Activated CD4-positive, alpha-beta memory T cell treated with anti-CD3 and anti-CD28 coated beads, Interleukin-2, amount 10 ng/mL, durations not matched to agents 7 days and 5 days (primary cell): ENCODE measurements at regions of chr14 and their contacts with region 1.

Region 1: GRCh38 chr14:77067632-77068514 is 30.2 kb upstream of the CIPC start:
- DNase-seq: peak; percentile 66
- H3K4me3 Mint-ChIP-seq: no peak overlapping the region
- H3K27ac Mint-ChIP-seq: no peak overlapping the region
- H3K4me1 Mint-ChIP-seq: peaks cover 2% of the 10 kb centered on the region
- H3K27me3 Mint-ChIP-seq: peaks cover 17% of the 10 kb centered on the region

Region 2: DNA sequence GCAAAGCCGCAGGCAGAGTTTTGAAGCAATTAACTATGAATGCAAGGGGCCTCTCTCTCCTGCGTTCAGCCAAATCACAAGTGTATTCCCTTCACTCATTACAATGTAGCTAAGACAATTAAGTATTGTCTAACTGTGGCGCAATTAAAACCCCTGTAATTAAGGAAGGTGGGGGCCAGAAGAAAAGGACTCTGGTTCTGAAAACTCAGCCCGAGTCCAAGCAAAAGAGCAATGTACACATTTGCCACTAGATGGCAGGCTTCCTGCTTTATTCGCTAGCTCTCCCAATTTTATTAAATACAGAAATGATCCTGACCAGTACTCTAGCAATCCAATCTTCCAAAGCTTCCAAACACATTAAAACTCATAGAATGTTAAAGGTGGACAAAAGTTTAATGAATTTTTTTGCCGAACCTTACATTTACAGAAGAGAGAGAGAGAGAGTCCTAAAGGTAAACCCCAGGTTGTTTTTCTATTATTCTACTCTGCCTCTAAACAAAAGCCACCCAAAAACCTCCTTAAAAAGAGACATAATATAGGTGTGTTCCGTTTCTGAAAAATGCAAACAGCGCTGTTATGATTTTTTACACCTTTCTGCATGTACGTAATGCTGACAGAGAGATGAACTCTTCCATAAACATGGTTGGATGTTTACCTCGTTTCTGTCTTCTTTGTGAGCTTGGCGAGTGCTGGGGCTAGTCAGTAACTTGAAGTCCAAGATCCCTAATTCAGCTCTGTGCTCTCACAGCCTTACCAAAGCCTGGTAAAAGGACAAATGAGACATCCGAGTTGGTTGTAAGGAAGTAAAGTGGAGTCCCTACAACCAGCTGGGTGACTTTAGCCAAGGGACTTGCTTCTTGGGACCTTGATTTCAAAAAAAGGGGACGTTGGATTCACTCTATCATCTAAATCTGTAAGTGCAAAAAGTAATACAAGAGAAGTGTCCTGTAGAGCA is 357.5 kb before region 1 on chr14:
- CTCF ChIA-PET with region 1: interaction called, 26 read pairs
- POLR2A ChIA-PET with region 1: no interaction called
- DNase-seq: no peak
- H3K4me3 Mint-ChIP-seq: no peak overlapping the region
- H3K27ac Mint-ChIP-seq: no peak overlapping the region
- H3K4me1 Mint-ChIP-seq: no peaks in the 10 kb centered on the region
- H3K27me3 Mint-ChIP-seq: peaks cover 6% of the 10 kb centered on the region

Region 3: GRCh38 chr14:76918751-76919543 is 148.9 kb before region 1 on chr14:
- CTCF ChIA-PET with region 1: interaction called, 200 read pairs
- POLR2A ChIA-PET with region 1: no interaction called
- DNase-seq: no peak
- H3K4me3 Mint-ChIP-seq: no peak overlapping the region
- H3K27ac Mint-ChIP-seq: no peak overlapping the region
- H3K4me1 Mint-ChIP-seq: peaks cover 53% of the 10 kb centered on the region
- H3K27me3 Mint-ChIP-seq: peaks cover 5% of the 10 kb centered on the region

Region 4: GRCh38 chr14:76962303-76962660 is 105.6 kb before region 1 on chr14:
- CTCF ChIA-PET with region 1: interaction called, 14 read pairs
- POLR2A ChIA-PET with region 1: no interaction called
- DNase-seq: no peak
- H3K4me3 Mint-ChIP-seq: peak overlapping the region; percentile 57
- H3K27ac Mint-ChIP-seq: peak overlapping the region; percentile 92
- H3K4me1 Mint-ChIP-seq: peaks cover 77% of the 10 kb centered on the region
- H3K27me3 Mint-ChIP-seq: peaks cover 47% of the 10 kb centered on the region

Region 5: DNA sequence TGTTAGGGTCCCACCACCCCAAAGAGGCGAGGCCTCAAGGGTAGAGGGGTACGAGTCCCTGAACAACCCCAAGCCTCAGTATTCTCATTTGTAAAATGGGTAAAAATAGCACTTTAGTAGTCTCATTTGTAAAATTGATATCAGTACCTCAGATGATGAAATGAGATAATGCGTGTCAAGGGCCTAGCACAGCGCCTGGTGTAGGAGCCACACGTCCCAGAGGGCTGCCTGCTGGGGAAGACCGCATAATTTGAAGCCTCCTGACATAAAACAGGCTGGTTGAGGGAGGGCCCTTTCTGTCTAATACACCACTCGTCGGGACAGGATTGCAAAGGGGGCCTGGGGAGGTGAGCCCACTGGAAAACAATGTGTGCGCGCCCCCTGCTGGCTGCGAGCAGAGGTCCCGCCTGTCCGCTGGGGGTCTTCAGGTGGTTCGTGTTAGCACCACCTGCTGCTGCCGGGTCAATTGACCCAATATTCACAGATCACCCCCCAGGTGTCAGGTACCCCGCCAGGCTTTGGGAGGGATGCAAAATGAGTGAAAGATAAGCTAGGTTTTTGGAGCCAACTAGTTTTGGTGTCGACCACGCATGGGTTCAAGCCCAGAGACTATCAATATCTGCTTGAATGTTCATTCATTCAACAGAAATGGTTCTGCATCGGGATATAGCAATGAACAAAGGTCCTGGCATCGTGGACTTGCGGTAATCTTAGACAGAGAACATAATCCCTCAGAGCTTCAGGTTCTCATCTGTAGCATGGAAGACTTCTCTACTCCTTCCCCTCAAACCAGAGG is 14.6 kb before region 1 on chr14:
- CTCF ChIA-PET with region 1: interaction called, 32 read pairs
- POLR2A ChIA-PET with region 1: no interaction called
- DNase-seq: peak; percentile 71
- H3K4me3 Mint-ChIP-seq: no peak overlapping the region
- H3K27ac Mint-ChIP-seq: no peak overlapping the region
- H3K4me1 Mint-ChIP-seq: peaks cover 24% of the 10 kb centered on the region
- H3K27me3 Mint-ChIP-seq: peaks cover 2% of the 10 kb centered on the region

Region 6: GRCh38 chr14:77124345-77125280 is 56.7 kb after region 1 on chr14:
- CTCF ChIA-PET with region 1: interaction called, 15 read pairs
- POLR2A ChIA-PET with region 1: interaction called, 5 read pairs
- DNase-seq: peak; percentile 76
- H3K4me3 Mint-ChIP-seq: peak overlapping the region; percentile 76
- H3K27ac Mint-ChIP-seq: no peak overlapping the region
- H3K4me1 Mint-ChIP-seq: peaks cover 43% of the 10 kb centered on the region
- H3K27me3 Mint-ChIP-seq: peaks cover 40% of the 10 kb centered on the region

Region 7: DNA sequence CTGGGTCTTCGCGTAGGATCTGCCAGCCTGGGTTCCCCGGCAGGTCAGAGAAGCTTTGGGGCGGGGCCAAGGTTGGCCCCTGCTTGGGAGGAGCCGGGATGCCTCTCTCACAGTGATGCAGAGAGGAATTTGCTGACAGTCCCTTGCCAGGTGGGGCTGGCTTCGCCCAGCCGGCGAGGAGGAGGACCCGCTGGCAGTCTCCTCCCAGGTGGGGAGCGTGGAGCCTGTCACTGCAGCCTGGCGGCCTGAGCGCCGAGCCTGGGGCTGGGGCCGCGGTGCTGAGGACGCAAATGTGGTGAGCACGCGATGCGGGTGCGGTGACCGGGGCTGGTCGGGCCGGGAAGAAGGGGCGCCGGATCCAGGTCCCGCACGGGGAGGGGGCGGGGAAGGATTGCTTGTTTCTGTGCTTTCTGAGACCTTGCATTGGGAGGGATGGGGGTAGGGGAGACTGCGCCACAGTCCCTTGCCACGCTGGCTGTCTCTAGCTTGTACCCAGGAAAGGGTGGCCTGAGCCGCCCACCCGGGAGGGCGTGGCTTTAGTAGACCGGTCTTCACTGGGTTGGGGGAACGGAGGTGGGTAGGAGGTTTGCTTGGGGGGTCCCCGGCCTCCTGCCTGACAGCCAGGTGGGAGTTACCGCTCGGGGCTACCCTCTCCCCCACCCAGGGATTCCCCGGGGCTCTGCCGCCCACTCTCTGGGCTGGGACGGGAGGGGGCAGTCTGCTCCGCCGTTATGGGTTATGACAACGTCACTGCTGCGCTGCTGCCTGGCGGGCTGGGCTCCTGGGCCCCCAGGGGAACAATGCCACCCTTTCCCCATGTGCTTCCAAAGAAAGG is 113.9 kb after region 1 on chr14 and contains the start of gene TMEM63C:
- CTCF ChIA-PET with region 1: no interaction called
- POLR2A ChIA-PET with region 1: no interaction called
- DNase-seq: peak; percentile 54
- H3K4me3 Mint-ChIP-seq: peak within 1 kb of the TSS; percentile 43
- H3K27ac Mint-ChIP-seq: no peak within 1 kb of the TSS
- H3K4me1 Mint-ChIP-seq: peaks cover 17% of the 10 kb centered on the region
- H3K27me3 Mint-ChIP-seq: peaks cover 16% of the 10 kb centered on the region
- total RNA-seq, gene TMEM63C: 1.5 to 1.9 TPM

Region 8: GRCh38 chr14:77260631-77261030 is 192.8 kb after region 1 on chr14:
- CTCF ChIA-PET with region 1: no interaction called
- POLR2A ChIA-PET with region 1: no interaction called
- DNase-seq: no peak
- H3K4me3 Mint-ChIP-seq: no peak overlapping the region
- H3K27ac Mint-ChIP-seq: no peak overlapping the region
- H3K4me1 Mint-ChIP-seq: no peaks in the 10 kb centered on the region
- H3K27me3 Mint-ChIP-seq: peaks cover 24% of the 10 kb centered on the region